A673 (cell line): ENCODE measurements at regions of chr21 and their contacts with region 1.

Region 1: GRCh38 chr21:14259747-14260146 is 43.8 kb downstream of the RBM11 start:
- DNase-seq: peak; percentile 78
- H3K4me3 ChIP-seq: no peak overlapping the region
- H3K27ac ChIP-seq: no peak overlapping the region
- H3K4me1 ChIP-seq: no peaks in the 10 kb centered on the region
- H3K27me3 ChIP-seq: peaks cover 6% of the 10 kb centered on the region
- CTCF ChIP-seq: peak; percentile 72

Region 2: DNA sequence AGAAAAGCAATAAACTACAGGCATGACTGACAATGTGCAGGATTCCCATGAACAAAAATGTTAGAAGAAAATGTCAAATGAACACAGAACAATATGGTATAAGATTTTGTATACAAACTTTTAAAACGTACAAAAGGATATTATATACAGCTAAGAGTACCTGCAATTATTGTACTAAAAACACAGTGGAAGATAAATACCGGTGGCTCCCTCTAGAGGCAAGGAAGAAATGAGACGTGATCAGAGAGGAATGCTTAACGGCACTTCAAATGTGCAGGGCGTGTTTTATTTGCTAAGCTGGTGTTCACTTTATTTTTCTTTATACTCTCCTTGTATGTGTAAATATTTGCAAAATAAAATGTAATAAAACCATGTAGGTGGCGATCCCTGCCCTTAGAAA is 478.2 kb after region 1 on chr21:
- CTCF ChIA-PET with region 1: no interaction called
- POLR2A ChIA-PET with region 1: no interaction called
- intact Hi-C with region 1: loop called (anchors 10 kb)
- DNase-seq: peak; percentile 69
- H3K4me3 ChIP-seq: no peak overlapping the region
- H3K27ac ChIP-seq: no peak overlapping the region
- H3K4me1 ChIP-seq: no peaks in the 10 kb centered on the region
- H3K27me3 ChIP-seq: no peaks in the 10 kb centered on the region
- CTCF ChIP-seq: peak; percentile 84

Region 3: DNA sequence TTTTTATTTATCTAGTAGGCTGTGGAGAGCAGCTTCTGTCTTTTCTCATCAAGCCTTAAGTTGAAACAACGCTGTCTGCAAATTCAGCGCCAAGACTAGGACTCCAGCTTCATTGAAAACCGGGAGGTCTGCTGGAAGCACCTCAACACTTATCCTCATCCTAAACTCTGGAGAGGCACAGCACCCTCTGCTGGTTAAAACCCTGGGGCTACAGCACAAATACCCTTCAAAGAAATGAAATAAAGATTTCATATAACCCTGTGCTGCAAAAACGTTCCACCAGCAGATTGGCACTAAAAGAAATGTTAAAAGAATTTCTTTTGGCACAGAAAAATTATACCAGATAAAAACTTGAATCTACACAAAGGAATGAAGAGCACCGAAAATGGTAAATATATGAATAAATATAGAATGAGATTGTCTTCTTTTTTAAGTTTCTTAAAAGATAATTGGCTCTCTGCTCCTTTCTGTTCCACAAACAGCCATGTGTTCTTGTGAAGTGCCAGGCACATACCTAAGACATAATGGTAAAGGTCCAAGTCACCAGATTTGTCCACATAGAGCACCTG is 514.1 kb after region 1 on chr21:
- CTCF ChIA-PET with region 1: no interaction called
- POLR2A ChIA-PET with region 1: no interaction called
- intact Hi-C with region 1: loop called (anchors 2 kb)
- DNase-seq: peak; percentile 59
- H3K4me3 ChIP-seq: no peak overlapping the region
- H3K27ac ChIP-seq: no peak overlapping the region
- H3K4me1 ChIP-seq: no peaks in the 10 kb centered on the region
- H3K27me3 ChIP-seq: no peaks in the 10 kb centered on the region
- CTCF ChIP-seq: peak; percentile 75

Region 4: GRCh38 chr21:15483138-15483780 is 1223.5 kb after region 1 on chr21:
- CTCF ChIA-PET with region 1: no interaction called
- POLR2A ChIA-PET with region 1: no interaction called
- intact Hi-C with region 1: loop called (anchors 10 kb)
- DNase-seq: peak; percentile 84
- H3K4me3 ChIP-seq: no peak overlapping the region
- H3K27ac ChIP-seq: no peak overlapping the region
- H3K4me1 ChIP-seq: no peaks in the 10 kb centered on the region
- H3K27me3 ChIP-seq: no peaks in the 10 kb centered on the region
- CTCF ChIP-seq: peak; percentile 90

Region 5: GRCh38 chr21:15592271-15592860 is 1332.6 kb after region 1 on chr21:
- CTCF ChIA-PET with region 1: no interaction called
- POLR2A ChIA-PET with region 1: no interaction called
- intact Hi-C with region 1: loop called (anchors 10 kb)
- DNase-seq: peak; percentile 50
- H3K4me3 ChIP-seq: no peak overlapping the region
- H3K27ac ChIP-seq: no peak overlapping the region
- H3K4me1 ChIP-seq: no peaks in the 10 kb centered on the region
- H3K27me3 ChIP-seq: no peaks in the 10 kb centered on the region
- CTCF ChIP-seq: peak; percentile 70